MCF 10A (cell line): ENCODE measurements at regions of chr19 and their contacts with region 1.

Region 1: GRCh38 chr19:56314562-56315077 is at the start of gene ZSCAN5A:
- DNase-seq: peak; percentile 97
- H3K4me3 Mint-ChIP-seq: peak within 1 kb of the TSS; percentile 81
- H3K27ac Mint-ChIP-seq: peak within 1 kb of the TSS; percentile 100
- H3K4me1 Mint-ChIP-seq: peaks cover 18% of the 10 kb centered on the region
- H3K27me3 Mint-ChIP-seq: no peaks in the 10 kb centered on the region
- CTCF ChIP-seq: no peak
- total RNA-seq, gene ZSCAN5A: 6.2 and 8.1 TPM in 2 replicates

Region 2: DNA sequence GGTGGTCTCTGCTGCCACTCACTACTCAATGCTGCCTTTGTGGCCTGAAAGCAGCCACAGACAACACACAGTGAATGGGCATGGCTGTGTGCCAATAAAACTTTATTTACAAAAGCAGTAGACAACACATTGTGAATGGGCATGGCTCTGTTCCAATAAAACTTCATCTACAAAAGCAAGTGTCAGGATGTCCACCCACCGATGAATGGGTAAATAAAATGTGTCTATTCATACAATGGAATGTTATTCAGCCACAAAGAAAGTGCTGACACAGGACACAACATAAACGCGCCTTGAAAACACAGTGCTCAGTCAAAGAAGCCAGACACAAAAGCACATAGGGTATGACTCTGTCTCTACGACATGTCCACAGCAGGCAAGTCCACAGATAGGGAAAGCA is 20.1 kb before region 1 on chr19:
- CTCF ChIA-PET with region 1: interaction called, 25 read pairs
- POLR2A ChIA-PET with region 1: interaction called, 20 read pairs
- intact Hi-C with region 1: no loop called
- DNase-seq: peak; percentile 43
- H3K4me3 Mint-ChIP-seq: peak overlapping the region; percentile 21
- H3K27ac Mint-ChIP-seq: peak overlapping the region; percentile 80
- H3K4me1 Mint-ChIP-seq: peaks cover 6% of the 10 kb centered on the region
- H3K27me3 Mint-ChIP-seq: no peaks in the 10 kb centered on the region
- CTCF ChIP-seq: no peak

Region 3: DNA sequence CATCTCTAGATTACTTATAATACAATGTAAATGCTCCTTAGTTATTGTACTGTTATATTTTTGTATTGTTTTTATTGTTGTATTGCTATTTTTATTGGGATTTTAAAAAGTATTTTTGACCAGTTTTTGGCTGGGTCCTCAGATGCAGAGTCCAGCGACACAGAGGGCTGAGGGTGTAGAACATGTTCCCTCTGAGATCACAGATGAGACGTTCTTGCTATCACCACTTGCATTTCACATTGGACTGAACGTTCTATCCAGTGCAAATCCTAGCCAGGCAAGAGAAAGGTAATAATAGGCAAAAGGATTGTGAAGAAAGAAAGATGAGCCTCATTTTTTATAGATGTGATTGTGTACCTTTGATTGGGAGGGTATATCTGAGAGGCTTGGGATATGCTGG is 14.9 kb before region 1 on chr19:
- CTCF ChIA-PET with region 1: interaction called, 25 read pairs
- POLR2A ChIA-PET with region 1: interaction called, 20 read pairs
- intact Hi-C with region 1: no loop called
- DNase-seq: no peak
- H3K4me3 Mint-ChIP-seq: no peak overlapping the region
- H3K27ac Mint-ChIP-seq: no peak overlapping the region
- H3K4me1 Mint-ChIP-seq: peaks cover 4% of the 10 kb centered on the region
- H3K27me3 Mint-ChIP-seq: no peaks in the 10 kb centered on the region
- CTCF ChIP-seq: no peak